Right ventricle myocardium superior (tissue), 1 donor: ENCODE measurements at regions of chr17 and their contacts with region 1.

Region 1: GRCh38 chr17:688100-688989 is 26.3 kb downstream of the VPS53 start:
- DNase-seq: no peak
- ATAC-seq: no peak

Region 2: GRCh38 chr17:559551-560431 is 128.6 kb before region 1 on chr17:
- intact Hi-C with region 1: loop called (anchors 10 kb)
- DNase-seq: peak; percentile 56
- ATAC-seq: peak; percentile 84